H1 (cell line): ENCODE measurements at regions of chr11 and their contacts with region 1.

Region 1: GRCh38 chr11:2377511-2378443 is 667 bp downstream of the CD81 start:
- DNase-seq: peak in 1 of 2 experiments; percentile 73
- H3K4me3 ChIP-seq: peak overlapping the region; percentile 69 to 99 (median 78)
- H3K27ac ChIP-seq: peak overlapping the region; percentile 59; the same call in 1 of the 2 replicates
- H3K4me1 ChIP-seq: peaks cover 0 to 13% (median 6%) of the 10 kb centered on the region in 4 experiments; a peak in 6 of 7 replicates
- H3K27me3 ChIP-seq: peaks cover 0 to 2% (median 0%) of the 10 kb centered on the region in 4 experiments; a peak in 1 of 7 replicates
- CTCF ChIP-seq: no peak
- EP300 ChIP-seq: no peak
- POLR2A ChIP-seq: no peak; a peak in 1 of 3 replicates
- RAD21 ChIP-seq: no peak

Region 2: GRCh38 chr11:2314525-2315394 is 63.0 kb before region 1 on chr11:
- CTCF ChIA-PET with region 1: interaction called, 3 read pairs
- POLR2A ChIA-PET with region 1: interaction called, 13 read pairs
- DNase-seq: no peak
- H3K4me3 ChIP-seq: no peak overlapping the region
- H3K27ac ChIP-seq: no peak overlapping the region
- H3K4me1 ChIP-seq: no peaks in the 10 kb centered on the region
- H3K27me3 ChIP-seq: peaks cover 0 to 1% (median 0%) of the 10 kb centered on the region in 4 experiments; a peak in 1 of 7 replicates
- CTCF ChIP-seq: no peak
- EP300 ChIP-seq: no peak
- POLR2A ChIP-seq: no peak
- RAD21 ChIP-seq: no peak

Region 3: GRCh38 chr11:2366261-2366660 is 11.5 kb before region 1 on chr11:
- CTCF ChIA-PET with region 1: interaction called, 5 read pairs
- POLR2A ChIA-PET with region 1: interaction called, 34 read pairs
- DNase-seq: no peak
- H3K4me3 ChIP-seq: no peak overlapping the region
- H3K27ac ChIP-seq: no peak overlapping the region
- H3K4me1 ChIP-seq: no peaks in the 10 kb centered on the region
- H3K27me3 ChIP-seq: 0 out of 7 replicates have a peak, but pooled peaks cover 0 to 2% (median 0%) of the 10 kb centered on the region in 4 experiments
- CTCF ChIP-seq: no peak
- EP300 ChIP-seq: no peak
- POLR2A ChIP-seq: no peak
- RAD21 ChIP-seq: no peak

Region 4: GRCh38 chr11:2390725-2391151 is 13.0 kb after region 1 on chr11:
- CTCF ChIA-PET with region 1: interaction called, 4 read pairs
- POLR2A ChIA-PET with region 1: interaction called, 34 read pairs
- DNase-seq: peak in 1 of 2 experiments; percentile 56
- H3K4me3 ChIP-seq: no peak overlapping the region
- H3K27ac ChIP-seq: no peak overlapping the region
- H3K4me1 ChIP-seq: peaks cover 0 to 15% (median 11%) of the 10 kb centered on the region in 4 experiments; a peak in 5 of 7 replicates
- H3K27me3 ChIP-seq: no peaks in the 10 kb centered on the region
- CTCF ChIP-seq: no peak
- EP300 ChIP-seq: no peak
- POLR2A ChIP-seq: no peak
- RAD21 ChIP-seq: no peak

Region 5: DNA sequence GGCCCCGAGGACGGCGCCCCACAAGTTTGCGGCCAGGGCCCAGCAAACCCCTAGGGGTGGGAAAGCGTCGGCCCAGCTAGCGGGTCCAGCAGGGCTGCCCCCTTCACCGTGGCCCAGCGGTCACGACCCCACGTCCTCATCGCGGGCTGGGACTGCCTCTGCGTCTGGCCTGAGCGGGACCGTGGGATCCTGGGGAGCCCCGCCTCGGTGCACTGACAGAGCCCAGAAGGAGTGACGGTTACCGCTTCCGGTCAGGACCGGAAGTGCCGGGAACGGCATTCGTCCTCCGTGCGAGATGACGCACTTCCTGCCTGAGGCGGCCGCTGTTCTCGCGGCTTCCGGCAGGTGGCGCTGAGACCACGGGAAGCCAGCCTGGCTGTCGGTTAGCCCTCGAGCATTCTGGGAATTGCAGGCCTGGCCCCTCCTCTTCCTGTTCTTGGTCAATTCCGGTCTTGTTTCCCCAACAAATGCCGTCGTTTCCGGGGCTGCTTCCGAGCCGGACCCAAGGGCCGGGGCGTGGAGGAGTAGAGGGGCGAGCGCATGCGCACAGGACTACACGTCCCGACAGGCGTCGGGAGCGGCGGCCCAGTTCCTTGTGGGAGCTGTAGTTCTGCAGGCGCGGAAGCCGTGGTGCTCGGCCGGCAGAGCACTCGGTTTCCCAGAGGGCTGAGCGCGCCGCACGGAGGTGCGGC is 22.4 kb after region 1 on chr11 and contains the start of gene TSSC4:
- CTCF ChIA-PET with region 1: interaction called, 43 read pairs
- POLR2A ChIA-PET with region 1: interaction called, 42 read pairs
- DNase-seq: peak; percentile 100
- H3K4me3 ChIP-seq: peak within 1 kb of the TSS; percentile 86 to 98 (median 97)
- H3K27ac ChIP-seq: peak within 1 kb of the TSS; percentile 78
- H3K4me1 ChIP-seq: peaks cover 0 to 17% (median 6%) of the 10 kb centered on the region in 4 experiments; a peak in 5 of 7 replicates
- H3K27me3 ChIP-seq: no peaks in the 10 kb centered on the region
- CTCF ChIP-seq: peak in 2 of 3 experiments; percentile 92 to 100; a peak in 3 of 4 replicates
- EP300 ChIP-seq: no peak
- POLR2A ChIP-seq: peak in 1 of 2 experiments; percentile 61; a peak in 1 of 3 replicates
- RAD21 ChIP-seq: peak; percentile 74 to 76
- total RNA-seq, gene TSSC4: 39.3 and 44.3 TPM in 2 replicates